MCF 10A (cell line): ENCODE measurements at regions of chr12 and their contacts with region 1.

Region 1: GRCh38 chr12:103571286-103571685 is 15.8 kb upstream of the STAB2 start:
- DNase-seq: no peak
- H3K4me3 Mint-ChIP-seq: no peak overlapping the region
- H3K27ac Mint-ChIP-seq: no peak overlapping the region
- H3K4me1 Mint-ChIP-seq: peaks cover 9% of the 10 kb centered on the region
- H3K27me3 Mint-ChIP-seq: peaks cover 11% of the 10 kb centered on the region
- CTCF ChIP-seq: no peak

Region 2: DNA sequence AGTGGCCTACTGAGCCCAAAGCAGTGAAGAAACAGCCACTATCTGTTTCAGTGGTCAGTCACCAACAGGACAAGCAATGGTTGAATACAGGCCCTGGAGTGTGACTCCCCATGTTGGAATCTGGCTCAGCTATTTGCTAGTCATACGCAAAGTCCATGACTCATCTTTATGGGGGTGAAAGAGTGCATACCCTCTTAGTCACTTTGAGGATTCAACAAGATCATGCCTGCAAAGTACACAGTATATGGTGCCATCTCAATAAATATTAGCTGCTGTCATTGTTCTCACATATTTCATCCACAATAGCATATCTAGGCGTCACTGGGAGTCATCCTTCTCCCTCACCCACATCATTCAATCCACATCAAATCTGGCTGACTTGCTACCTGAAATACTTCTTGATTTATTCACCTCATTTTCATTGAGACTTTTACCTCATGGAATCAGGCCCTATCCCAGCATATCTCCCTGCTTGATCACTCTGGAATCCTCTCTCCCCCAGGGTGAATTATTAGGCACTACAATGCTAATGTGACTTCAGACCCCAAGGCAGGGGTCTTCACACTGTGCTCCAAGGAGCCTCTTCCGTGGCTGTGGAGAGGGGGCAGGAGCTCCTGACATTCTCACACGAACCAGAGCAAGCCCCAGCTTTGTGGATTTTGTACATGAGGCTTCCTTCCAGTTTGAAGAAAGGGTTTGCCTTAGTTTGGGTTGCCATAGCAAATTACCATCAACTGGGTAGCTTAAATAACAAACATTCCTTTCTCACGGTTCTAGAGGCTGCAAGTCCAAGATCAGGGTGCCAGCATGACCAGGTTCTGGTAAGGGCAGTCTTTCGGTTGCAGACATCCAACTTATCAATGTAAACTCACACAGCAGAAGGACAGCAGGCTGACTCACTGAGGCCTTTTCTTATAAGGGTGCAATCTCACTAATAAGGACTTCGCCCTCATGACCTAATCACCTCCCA is 10.4 kb before region 1 on chr12:
- CTCF ChIA-PET with region 1: interaction called, 19 read pairs
- POLR2A ChIA-PET with region 1: interaction called, 4 read pairs
- intact Hi-C with region 1: no loop called
- DNase-seq: peak; percentile 95
- H3K4me3 Mint-ChIP-seq: no peak overlapping the region
- H3K27ac Mint-ChIP-seq: peak overlapping the region; percentile 85
- H3K4me1 Mint-ChIP-seq: peaks cover 18% of the 10 kb centered on the region
- H3K27me3 Mint-ChIP-seq: no peaks in the 10 kb centered on the region
- CTCF ChIP-seq: no peak

Region 3: DNA sequence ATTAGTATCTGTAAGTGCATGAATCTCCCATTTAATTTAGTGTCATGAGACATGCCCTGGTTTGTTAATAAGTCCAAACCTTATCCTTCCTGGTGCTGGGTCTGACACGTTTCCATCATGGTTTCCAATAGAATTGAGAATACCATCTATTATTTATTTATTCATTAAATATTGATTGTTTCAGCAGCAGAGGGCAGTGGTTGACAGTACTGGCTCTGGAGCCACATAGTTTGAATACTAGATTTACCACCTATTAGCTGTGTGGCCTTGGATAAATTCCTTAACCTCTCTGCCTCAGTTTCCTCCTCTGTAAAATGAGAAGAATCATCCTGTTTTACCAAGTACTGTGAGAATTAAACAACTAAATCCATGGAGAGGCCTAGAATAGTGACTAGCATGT is 14.8 kb after region 1 on chr12:
- CTCF ChIA-PET with region 1: interaction called, 11 read pairs
- POLR2A ChIA-PET with region 1: no interaction called
- intact Hi-C with region 1: no loop called
- DNase-seq: peak; percentile 8
- H3K4me3 Mint-ChIP-seq: no peak overlapping the region
- H3K27ac Mint-ChIP-seq: no peak overlapping the region
- H3K4me1 Mint-ChIP-seq: peaks cover 6% of the 10 kb centered on the region
- H3K27me3 Mint-ChIP-seq: no peaks in the 10 kb centered on the region
- CTCF ChIP-seq: no peak